Mucosa of descending colon (tissue), 3 donors: ENCODE measurements at regions of chr19 and their contacts with region 1.

Region 1: GRCh38 chr19:6021878-6022569 is 44.1 kb upstream of the RANBP3 start:
- DNase-seq: peak; percentile 57 to 87 (median 69)
- ATAC-seq: peak; percentile 89
- H3K4me3 ChIP-seq: no peak overlapping the region
- H3K4me1 ChIP-seq: no peaks in the 10 kb centered on the region
- CTCF ChIP-seq: peak; percentile 34

Region 2: DNA sequence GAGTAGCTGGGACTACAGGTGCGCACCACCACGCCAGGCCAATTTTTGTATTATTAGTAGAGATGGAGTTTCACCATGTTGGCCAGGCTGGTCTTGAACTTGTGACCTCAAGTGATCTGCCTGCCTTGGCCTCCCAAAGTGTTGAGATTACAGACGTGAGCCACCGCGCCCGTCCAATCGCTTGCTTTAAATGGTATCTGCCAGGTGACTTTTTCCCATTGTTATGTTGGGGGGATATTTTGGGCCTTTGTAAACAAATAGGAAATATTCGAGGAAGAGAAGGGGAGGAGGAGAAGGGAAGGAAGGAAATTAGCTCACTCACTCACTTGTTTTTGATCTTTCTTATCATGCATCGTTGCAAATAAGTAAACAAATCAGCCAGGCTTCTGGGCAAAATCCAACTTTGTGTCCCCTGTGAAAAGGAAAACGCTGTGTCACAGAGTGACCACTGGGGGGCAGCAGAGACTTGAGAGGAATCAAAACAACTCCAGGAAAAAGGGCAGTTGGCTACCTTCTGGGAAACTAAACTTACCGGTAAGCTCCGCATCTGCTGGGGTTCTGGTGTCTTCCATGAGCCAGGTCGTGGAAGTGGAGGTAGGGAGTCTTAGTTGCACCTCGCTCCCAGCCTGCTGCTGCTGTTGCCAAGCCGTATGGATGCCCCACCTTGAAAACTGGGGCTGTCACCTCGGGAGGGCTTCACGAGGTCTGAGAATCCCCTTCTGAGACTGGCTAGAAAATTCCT is 34.8 kb before region 1 on chr19:
- intact Hi-C with region 1: loop called (anchors 5 kb)
- DNase-seq: peak in 2 of 3 donors; percentile 55 to 79
- ATAC-seq: peak; percentile 93
- H3K4me3 ChIP-seq: no peak overlapping the region
- H3K4me1 ChIP-seq: peaks cover 5% of the 10 kb centered on the region
- CTCF ChIP-seq: peak; percentile 81

Region 3: DNA sequence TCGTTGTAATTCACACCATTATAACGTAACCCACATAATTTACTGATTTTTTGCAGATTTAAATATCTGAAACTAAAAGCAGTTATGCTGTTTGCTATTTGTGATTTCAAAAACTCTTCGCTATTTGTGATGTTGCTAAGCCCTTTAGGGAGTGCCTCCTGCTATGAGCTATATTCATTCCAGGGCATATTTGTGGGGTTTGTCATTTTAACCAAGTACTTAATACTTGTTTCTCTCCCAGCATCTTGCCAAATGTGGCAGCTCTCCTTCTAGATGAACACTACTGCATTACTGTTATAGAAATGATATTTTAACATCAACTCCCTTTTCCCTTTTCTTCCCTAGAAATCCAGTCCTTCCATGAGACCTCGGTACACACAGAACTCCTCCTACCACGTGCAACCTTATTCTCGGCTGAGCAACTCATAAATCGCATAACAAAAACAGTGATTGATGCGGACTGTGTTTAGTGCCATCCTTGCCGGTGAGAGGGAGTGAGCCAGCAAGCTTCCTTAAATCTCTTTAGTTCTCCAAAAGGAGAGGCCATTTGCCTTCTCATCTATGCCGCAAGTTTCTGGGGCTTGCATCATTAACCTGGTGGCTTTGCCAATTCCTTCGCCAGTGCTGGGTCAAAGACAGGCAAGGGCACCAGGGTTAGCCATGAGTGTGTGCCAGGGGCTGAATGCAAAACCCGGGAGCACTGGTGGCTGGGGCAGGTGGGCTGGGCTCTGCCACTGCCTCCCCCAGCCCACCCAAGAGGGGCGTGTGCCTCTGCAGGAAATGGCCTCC is 54.8 kb after region 1 on chr19:
- intact Hi-C with region 1: no loop called
- DNase-seq: no peak
- ATAC-seq: peak; percentile 9
- H3K4me3 ChIP-seq: no peak overlapping the region
- H3K4me1 ChIP-seq: no peaks in the 10 kb centered on the region
- CTCF ChIP-seq: no peak

Region 4: GRCh38 chr19:6171566-6171965 is 149.5 kb after region 1 on chr19:
- intact Hi-C with region 1: no loop called
- DNase-seq: no peak
- ATAC-seq: no peak
- H3K4me3 ChIP-seq: no peak overlapping the region
- H3K4me1 ChIP-seq: no peaks in the 10 kb centered on the region
- CTCF ChIP-seq: no peak